CD4-positive, alpha-beta T cell (primary cell): ENCODE measurements at regions of chr4 and their contacts with region 1.

Region 1: GRCh38 chr4:2536193-2537010 is at the start of gene FAM193A:
- DNase-seq: peak; percentile 96 to 100 (median 98)
- ATAC-seq: peak; percentile 95
- H3K4me3 ChIP-seq: peak within 1 kb of the TSS; percentile 61
- H3K4me3 Mint-ChIP-seq: peak within 1 kb of the TSS; percentile 95
- H3K27ac ChIP-seq: peak within 1 kb of the TSS; percentile 26 to 70
- H3K27ac Mint-ChIP-seq: peak within 1 kb of the TSS; percentile 89
- H3K4me1 ChIP-seq: peaks cover 43% of the 10 kb centered on the region
- H3K4me1 Mint-ChIP-seq: peaks cover 20% of the 10 kb centered on the region
- H3K27me3 ChIP-seq: no peaks in the 10 kb centered on the region
- H3K27me3 Mint-ChIP-seq: no peaks in the 10 kb centered on the region
- CTCF ChIP-seq: no peak
- total RNA-seq, gene FAM193A: 28.4 to 30.0 TPM

Region 2: GRCh38 chr4:2262143-2262943 is 274.1 kb before region 1 on chr4:
- CTCF ChIA-PET with region 1: no interaction called
- POLR2A ChIA-PET with region 1: interaction called, 17 read pairs
- intact Hi-C with region 1: loop called in 1 of 2 experiments (anchors 1 kb)
- DNase-seq: peak; percentile 92 to 99 (median 97)
- ATAC-seq: peak; percentile 89
- H3K4me3 ChIP-seq: peak overlapping the region; percentile 64
- H3K4me3 Mint-ChIP-seq: peak overlapping the region; percentile 96
- H3K27ac ChIP-seq: peak overlapping the region; percentile 84 to 93
- H3K27ac Mint-ChIP-seq: peak overlapping the region; percentile 95
- H3K4me1 ChIP-seq: peaks cover 51% of the 10 kb centered on the region
- H3K4me1 Mint-ChIP-seq: no peaks in the 10 kb centered on the region
- H3K27me3 ChIP-seq: no peaks in the 10 kb centered on the region
- H3K27me3 Mint-ChIP-seq: no peaks in the 10 kb centered on the region
- CTCF ChIP-seq: no peak

Region 3: GRCh38 chr4:2354118-2354517 is 182.3 kb before region 1 on chr4:
- CTCF ChIA-PET with region 1: no interaction called
- POLR2A ChIA-PET with region 1: no interaction called
- intact Hi-C with region 1: no loop called
- DNase-seq: peak; percentile 14 to 65 (median 29)
- ATAC-seq: peak; percentile 77
- H3K4me3 ChIP-seq: no peak overlapping the region
- H3K4me3 Mint-ChIP-seq: no peak overlapping the region
- H3K27ac ChIP-seq: no peak overlapping the region
- H3K27ac Mint-ChIP-seq: peak overlapping the region; percentile 51
- H3K4me1 ChIP-seq: peaks cover 6% of the 10 kb centered on the region
- H3K4me1 Mint-ChIP-seq: peaks cover 6% of the 10 kb centered on the region
- H3K27me3 ChIP-seq: no peaks in the 10 kb centered on the region
- H3K27me3 Mint-ChIP-seq: no peaks in the 10 kb centered on the region
- CTCF ChIP-seq: peak; percentile 45

Region 4: DNA sequence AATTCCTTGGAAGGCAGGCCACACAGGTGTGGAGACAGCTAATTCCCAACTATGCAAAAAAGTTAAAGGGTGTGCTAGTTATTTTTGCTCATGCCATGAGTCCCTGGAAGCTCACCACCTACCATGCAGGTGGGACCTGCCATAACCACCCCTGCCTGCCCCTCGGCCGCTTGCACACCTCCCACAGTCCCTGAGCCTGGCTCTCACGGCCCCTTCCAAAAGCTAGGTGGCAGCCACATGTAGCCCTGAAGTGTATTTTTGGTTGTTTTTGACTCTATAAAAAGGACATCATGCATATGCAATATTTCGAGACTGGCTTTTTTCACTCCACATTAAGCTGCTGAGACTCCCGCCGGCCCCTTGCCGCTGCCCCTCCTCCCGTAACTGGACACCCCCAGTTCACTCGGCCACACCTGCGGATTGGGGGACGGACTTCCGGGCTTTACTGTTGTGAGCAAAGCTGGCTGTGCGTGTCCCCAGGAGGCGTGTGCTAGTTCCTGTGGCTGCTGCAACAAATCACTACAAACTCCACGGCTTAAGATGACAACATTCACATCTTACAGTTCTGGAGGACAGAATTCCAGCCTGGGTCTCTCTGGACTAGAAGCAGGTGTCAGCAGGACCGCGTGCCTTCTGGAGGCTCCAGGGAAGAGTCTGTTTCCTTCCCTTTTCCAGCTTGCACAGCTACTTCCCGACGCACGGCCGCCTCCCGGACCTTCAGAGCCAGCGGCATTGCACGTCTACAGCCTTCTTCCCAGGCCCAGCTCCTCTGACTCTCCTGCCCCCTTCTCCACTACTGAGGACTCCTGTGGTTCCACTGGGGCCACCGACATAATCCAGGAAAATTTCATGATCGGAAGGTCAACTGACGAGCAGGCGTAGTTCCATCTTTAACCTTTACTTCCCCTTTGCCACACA is 142.8 kb before region 1 on chr4:
- CTCF ChIA-PET with region 1: no interaction called
- POLR2A ChIA-PET with region 1: no interaction called
- intact Hi-C with region 1: no loop called
- DNase-seq: peak in 4 of 14 experiments; percentile 13 to 32 (median 21)
- ATAC-seq: peak; percentile 50
- H3K4me3 ChIP-seq: no peak overlapping the region
- H3K4me3 Mint-ChIP-seq: peak overlapping the region; percentile 18
- H3K27ac ChIP-seq: no peak overlapping the region
- H3K27ac Mint-ChIP-seq: peak overlapping the region; percentile 15
- H3K4me1 ChIP-seq: peaks cover 42% of the 10 kb centered on the region
- H3K4me1 Mint-ChIP-seq: peaks cover 44% of the 10 kb centered on the region
- H3K27me3 ChIP-seq: peaks cover 0 to 2% of the 10 kb centered on the region in 2 experiments
- H3K27me3 Mint-ChIP-seq: peaks cover 14% of the 10 kb centered on the region
- CTCF ChIP-seq: no peak

Region 5: GRCh38 chr4:2412885-2413716 is 123.3 kb before region 1 on chr4:
- CTCF ChIA-PET with region 1: interaction called, 5 read pairs
- POLR2A ChIA-PET with region 1: interaction called, 13 read pairs
- intact Hi-C with region 1: loop called in 1 of 2 experiments (anchors 1 kb)
- DNase-seq: peak; percentile 63 to 98 (median 84)
- ATAC-seq: peak; percentile 73
- H3K4me3 ChIP-seq: peak overlapping the region; percentile 52
- H3K4me3 Mint-ChIP-seq: peak overlapping the region; percentile 74
- H3K27ac ChIP-seq: peak overlapping the region; percentile 81 to 96
- H3K27ac Mint-ChIP-seq: peak overlapping the region; percentile 94
- H3K4me1 ChIP-seq: peaks cover 90% of the 10 kb centered on the region
- H3K4me1 Mint-ChIP-seq: peaks cover 72% of the 10 kb centered on the region
- H3K27me3 ChIP-seq: peaks cover 6 to 9% of the 10 kb centered on the region in 2 experiments
- H3K27me3 Mint-ChIP-seq: peaks cover 4% of the 10 kb centered on the region
- CTCF ChIP-seq: no peak

Region 6: DNA sequence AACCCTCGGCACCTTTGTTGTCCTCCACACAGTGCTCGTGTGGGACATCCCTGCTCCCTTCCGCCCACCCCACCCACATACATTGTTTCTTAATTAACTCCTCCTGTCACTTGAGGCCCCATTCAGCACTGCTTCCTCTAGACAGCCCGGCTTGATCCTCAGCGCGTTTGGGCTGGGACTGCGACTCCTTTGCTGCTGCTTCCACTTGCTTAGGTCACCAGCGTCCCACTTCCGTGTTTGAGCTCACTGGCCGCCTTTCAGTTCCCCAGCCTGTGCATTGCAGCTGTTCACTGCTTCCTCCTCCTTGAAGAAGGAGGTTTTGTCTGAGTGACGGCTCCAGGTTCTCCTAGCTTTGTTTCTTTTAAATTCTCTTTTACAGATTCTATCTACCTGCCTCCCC is 51.4 kb before region 1 on chr4:
- CTCF ChIA-PET with region 1: interaction called, 3 read pairs
- POLR2A ChIA-PET with region 1: interaction called, 8 read pairs
- intact Hi-C with region 1: loop called in 1 of 2 experiments (anchors 5 kb)
- DNase-seq: peak; percentile 43 to 85 (median 64)
- ATAC-seq: peak; percentile 92
- H3K4me3 ChIP-seq: peak overlapping the region; percentile 35
- H3K4me3 Mint-ChIP-seq: peak overlapping the region; percentile 64
- H3K27ac ChIP-seq: peak overlapping the region in 1 of 2 donors; percentile 74
- H3K27ac Mint-ChIP-seq: peak overlapping the region; percentile 75
- H3K4me1 ChIP-seq: peaks cover 94% of the 10 kb centered on the region
- H3K4me1 Mint-ChIP-seq: peaks cover 77% of the 10 kb centered on the region
- H3K27me3 ChIP-seq: no peaks in the 10 kb centered on the region
- H3K27me3 Mint-ChIP-seq: no peaks in the 10 kb centered on the region
- CTCF ChIP-seq: no peak

Region 7: GRCh38 chr4:2630556-2631273 is 94.3 kb after region 1 on chr4:
- CTCF ChIA-PET with region 1: no interaction called
- POLR2A ChIA-PET with region 1: no interaction called
- intact Hi-C with region 1: no loop called
- DNase-seq: no peak
- ATAC-seq: no peak
- H3K4me3 ChIP-seq: no peak overlapping the region
- H3K4me3 Mint-ChIP-seq: no peak overlapping the region
- H3K27ac ChIP-seq: no peak overlapping the region
- H3K27ac Mint-ChIP-seq: no peak overlapping the region
- H3K4me1 ChIP-seq: no peaks in the 10 kb centered on the region
- H3K4me1 Mint-ChIP-seq: no peaks in the 10 kb centered on the region
- H3K27me3 ChIP-seq: no peaks in the 10 kb centered on the region
- H3K27me3 Mint-ChIP-seq: no peaks in the 10 kb centered on the region
- CTCF ChIP-seq: no peak

Region 8: GRCh38 chr4:2843263-2843940 is 307.0 kb after region 1 on chr4 and contains the start of gene ADD1:
- CTCF ChIA-PET with region 1: no interaction called
- POLR2A ChIA-PET with region 1: no interaction called
- intact Hi-C with region 1: loop called in 1 of 2 experiments (anchors 5 kb)
- DNase-seq: peak; percentile 82 to 100 (median 92)
- ATAC-seq: peak; percentile 93
- H3K4me3 ChIP-seq: peak within 1 kb of the TSS; percentile 97
- H3K4me3 Mint-ChIP-seq: peak within 1 kb of the TSS; percentile 98
- H3K27ac ChIP-seq: peak within 1 kb of the TSS; percentile 66 to 85
- H3K27ac Mint-ChIP-seq: peak within 1 kb of the TSS; percentile 92
- H3K4me1 ChIP-seq: peaks cover 49% of the 10 kb centered on the region
- H3K4me1 Mint-ChIP-seq: peaks cover 63% of the 10 kb centered on the region
- H3K27me3 ChIP-seq: no peaks in the 10 kb centered on the region
- H3K27me3 Mint-ChIP-seq: no peaks in the 10 kb centered on the region
- CTCF ChIP-seq: no peak
- total RNA-seq, gene ADD1: 153 TPM

Region 9: DNA sequence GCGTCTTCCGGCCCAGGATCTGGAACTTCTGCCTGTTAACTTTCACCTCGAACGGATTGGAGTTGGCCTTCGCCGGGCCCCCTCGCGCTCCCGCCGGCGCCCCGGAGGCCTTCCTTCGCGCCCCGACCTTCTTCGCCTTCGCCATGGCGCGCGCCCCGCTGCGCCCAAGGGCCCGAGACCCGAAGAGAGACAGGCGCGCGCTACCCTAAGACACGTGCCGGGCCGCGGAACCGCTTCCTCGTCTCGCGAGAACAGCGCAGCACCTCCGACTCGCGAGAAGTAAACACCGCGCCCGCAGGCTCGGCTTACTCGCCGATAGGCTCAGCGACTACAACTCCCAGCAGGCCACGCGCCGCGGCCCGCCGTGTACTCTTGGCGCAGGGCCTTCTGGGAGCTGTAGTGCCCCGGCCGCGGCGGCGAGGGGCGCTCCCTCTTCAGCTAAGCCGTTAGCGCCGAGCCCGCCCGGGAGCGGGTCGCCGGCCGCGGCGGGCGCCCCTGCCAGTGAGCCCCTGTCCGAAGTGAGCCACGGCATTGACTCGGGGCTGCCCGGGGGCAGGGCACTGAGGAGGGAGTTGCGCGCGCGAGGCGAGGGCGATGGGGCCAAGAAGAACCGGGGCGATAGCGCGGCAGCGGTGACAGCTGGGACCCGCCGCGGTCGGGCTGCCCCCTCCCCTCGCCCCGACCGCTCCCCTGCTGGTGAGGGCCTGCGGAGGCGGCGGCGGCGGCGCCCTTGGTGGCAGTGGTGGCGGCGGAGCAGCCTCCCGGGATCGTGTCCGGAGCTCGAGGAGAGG is 427.0 kb after region 1 on chr4 and contains the starts of genes GRK4 and NOP14:
- CTCF ChIA-PET with region 1: no interaction called
- POLR2A ChIA-PET with region 1: interaction called, 3 read pairs
- intact Hi-C with region 1: loop called in 1 of 2 experiments (anchors 2 kb)
- DNase-seq: peak; percentile 92 to 99 (median 96)
- ATAC-seq: peak; percentile 89
- H3K4me3 ChIP-seq: peak within 1 kb of the TSS; percentile 87
- H3K4me3 Mint-ChIP-seq: peak within 1 kb of the TSS; percentile 92
- H3K27ac ChIP-seq: peak within 1 kb of the TSS; percentile 88 to 92
- H3K27ac Mint-ChIP-seq: peak within 1 kb of the TSS; percentile 84
- H3K4me1 ChIP-seq: peaks cover 34% of the 10 kb centered on the region
- H3K4me1 Mint-ChIP-seq: peaks cover 42% of the 10 kb centered on the region
- H3K27me3 ChIP-seq: no peaks in the 10 kb centered on the region
- H3K27me3 Mint-ChIP-seq: no peaks in the 10 kb centered on the region
- CTCF ChIP-seq: peak; percentile 62
- total RNA-seq, gene GRK4: 1.2 to 1.8 TPM
- total RNA-seq, gene NOP14: 21.8 TPM

Region 10: DNA sequence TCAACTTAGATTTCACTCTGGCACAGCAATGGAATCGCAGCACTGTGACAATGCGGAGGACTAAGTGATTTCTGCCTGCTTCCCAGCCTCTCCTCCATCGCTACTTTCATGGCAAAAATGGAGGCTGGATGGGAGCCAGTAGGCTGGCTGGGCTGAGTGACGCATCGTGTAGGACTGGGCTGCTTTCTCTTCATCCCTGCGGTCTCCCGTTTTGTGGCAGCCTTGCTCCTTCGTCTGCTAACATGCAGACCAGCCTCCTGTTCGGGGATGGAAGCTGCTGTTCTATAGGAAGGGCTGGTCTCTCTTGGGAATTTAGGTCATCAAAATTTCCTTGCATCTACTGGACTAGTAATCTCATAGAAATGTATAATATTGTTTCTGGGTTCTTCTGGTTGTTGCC is 740.6 kb after region 1 on chr4:
- CTCF ChIA-PET with region 1: no interaction called
- POLR2A ChIA-PET with region 1: no interaction called
- intact Hi-C with region 1: no loop called
- DNase-seq: no peak
- ATAC-seq: no peak
- H3K4me3 ChIP-seq: no peak overlapping the region
- H3K4me3 Mint-ChIP-seq: no peak overlapping the region
- H3K27ac ChIP-seq: no peak overlapping the region
- H3K27ac Mint-ChIP-seq: no peak overlapping the region
- H3K4me1 ChIP-seq: no peaks in the 10 kb centered on the region
- H3K4me1 Mint-ChIP-seq: no peaks in the 10 kb centered on the region
- H3K27me3 ChIP-seq: peaks cover 0 to 3% of the 10 kb centered on the region in 2 experiments
- H3K27me3 Mint-ChIP-seq: no peaks in the 10 kb centered on the region
- CTCF ChIP-seq: no peak

Region 11: DNA sequence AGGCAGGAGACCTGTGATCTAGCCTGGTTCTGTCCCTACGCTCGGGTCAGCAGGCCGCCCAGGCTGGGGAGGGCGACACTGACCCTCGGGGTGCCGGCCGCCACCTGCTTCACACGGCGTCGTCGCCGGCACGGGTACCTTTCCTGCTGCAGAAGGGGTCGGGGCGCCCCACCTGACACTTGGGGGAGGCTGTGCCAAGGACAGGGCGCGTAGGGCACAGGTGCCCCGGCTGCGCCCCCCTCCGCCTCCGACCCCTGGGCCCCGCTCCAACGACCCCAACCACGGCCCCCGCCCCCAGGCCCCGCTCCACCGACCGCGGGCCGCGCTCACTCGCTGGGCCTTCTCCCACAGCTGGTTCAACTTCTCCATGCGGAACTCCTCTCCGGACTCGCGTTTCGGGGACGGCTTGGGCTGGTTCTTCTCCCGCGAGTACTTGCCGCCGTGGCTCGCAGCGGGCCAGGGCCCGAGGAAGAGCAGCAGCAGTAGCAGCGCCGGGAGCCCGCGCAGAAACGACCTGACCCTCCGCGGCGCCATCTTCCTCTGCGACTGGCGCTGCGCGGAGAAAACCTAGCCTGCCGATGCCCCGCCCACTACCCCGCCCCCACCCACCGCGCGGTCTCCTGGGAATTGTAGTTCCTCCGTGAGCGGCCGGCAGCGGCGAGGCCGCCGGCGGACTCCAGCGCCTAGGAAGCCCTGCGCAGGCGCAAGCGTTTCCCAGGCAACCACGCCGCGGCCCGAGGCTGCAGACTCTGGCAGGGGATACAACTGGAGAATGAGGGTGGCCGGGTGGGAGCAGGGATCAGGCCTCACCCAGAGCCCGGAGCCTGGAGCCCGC is 995.7 kb after region 1 on chr4 and contains the start of gene LRPAP1:
- CTCF ChIA-PET with region 1: no interaction called
- POLR2A ChIA-PET with region 1: no interaction called
- intact Hi-C with region 1: loop called in 1 of 2 experiments (anchors 10 kb)
- DNase-seq: peak; percentile 59 to 94 (median 80)
- ATAC-seq: peak; percentile 91
- H3K4me3 ChIP-seq: peak within 1 kb of the TSS; percentile 85
- H3K4me3 Mint-ChIP-seq: peak within 1 kb of the TSS; percentile 100
- H3K27ac ChIP-seq: no peak within 1 kb of the TSS
- H3K27ac Mint-ChIP-seq: peak within 1 kb of the TSS; percentile 94
- H3K4me1 ChIP-seq: peaks cover 52% of the 10 kb centered on the region
- H3K4me1 Mint-ChIP-seq: peaks cover 36% of the 10 kb centered on the region
- H3K27me3 ChIP-seq: no peaks in the 10 kb centered on the region
- H3K27me3 Mint-ChIP-seq: no peaks in the 10 kb centered on the region
- CTCF ChIP-seq: no peak
- total RNA-seq, gene LRPAP1: 84.2 to 88.0 TPM